Stomach (tissue), 19 donors: ENCODE measurements at regions of chr4 and their contacts with region 1.

Region 1: DNA sequence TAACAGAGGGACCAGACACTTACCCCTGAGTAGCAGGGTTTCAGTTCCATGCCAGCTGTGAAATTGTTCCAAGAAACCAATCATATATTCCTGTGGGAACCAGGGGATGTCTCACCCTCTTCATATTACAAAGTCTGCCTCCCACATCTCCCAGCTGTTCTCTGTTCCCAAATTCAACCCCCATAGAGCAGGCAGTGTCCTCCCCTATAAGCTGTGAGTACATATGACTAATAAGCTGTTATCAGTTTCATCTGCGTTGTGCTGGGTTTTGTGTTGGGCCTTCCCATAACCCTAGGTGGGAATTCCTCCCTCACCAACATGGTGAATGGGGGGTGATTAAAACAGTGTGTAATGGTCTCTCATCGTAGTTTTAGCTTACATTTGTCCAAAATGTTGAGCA is 41.0 kb downstream of the CEP44 start:
- DNase-seq: no peak
- H3K4me3 ChIP-seq: no peak overlapping the region
- H3K27ac ChIP-seq: no peak overlapping the region
- H3K4me1 ChIP-seq: no peaks in the 10 kb centered on the region
- H3K27me3 ChIP-seq: no peaks in the 10 kb centered on the region
- CTCF ChIP-seq: no peak
- EP300 ChIP-seq: no peak
- POLR2A ChIP-seq: no peak

Region 2: GRCh38 chr4:174080361-174080760 is 244.4 kb before region 1 on chr4:
- intact Hi-C with region 1: no loop called
- DNase-seq: no peak
- H3K4me3 ChIP-seq: no peak overlapping the region
- H3K27ac ChIP-seq: no peak overlapping the region
- H3K4me1 ChIP-seq: no peaks in the 10 kb centered on the region
- H3K27me3 ChIP-seq: no peaks in the 10 kb centered on the region
- CTCF ChIP-seq: no peak
- EP300 ChIP-seq: no peak
- POLR2A ChIP-seq: no peak

Region 3: DNA sequence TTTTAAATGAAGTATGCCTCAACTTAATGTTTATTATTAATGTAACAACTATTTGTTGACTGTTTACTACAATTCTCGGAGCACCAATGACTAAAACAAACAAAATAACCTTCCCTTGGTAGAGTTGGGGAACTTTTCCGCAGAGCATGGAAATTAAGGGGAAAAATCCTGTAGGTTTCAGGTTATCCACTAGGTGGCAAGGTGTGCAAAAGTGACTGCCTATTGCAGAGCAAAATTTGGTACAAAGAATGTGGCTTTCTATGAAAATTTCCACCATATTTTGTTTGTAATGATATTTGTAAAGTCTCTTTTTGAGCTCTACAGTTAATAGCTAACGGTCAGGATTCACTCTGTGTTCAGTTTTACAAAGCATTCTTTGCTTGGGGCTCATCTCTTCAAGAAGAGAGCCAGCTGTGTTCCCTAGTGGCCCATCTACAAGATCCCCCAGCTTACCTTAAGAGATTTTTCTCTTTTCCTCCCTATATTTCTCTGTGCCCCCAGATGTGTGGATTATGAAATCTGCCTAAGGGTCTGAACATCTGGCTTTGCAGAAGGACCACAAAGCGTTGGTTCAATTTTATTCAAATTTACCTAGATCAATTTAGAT is 102.4 kb before region 1 on chr4:
- intact Hi-C with region 1: loop called (anchors 10 kb)
- DNase-seq: peak in 1 of 2 donors; percentile 53
- H3K4me3 ChIP-seq: no peak overlapping the region
- H3K27ac ChIP-seq: no peak overlapping the region
- H3K4me1 ChIP-seq: peaks cover 12 to 17% (median 12%) of the 10 kb centered on the region in 4 donors
- H3K27me3 ChIP-seq: peaks cover 0 to 35% (median 19%) of the 10 kb centered on the region in 3 donors
- CTCF ChIP-seq: peak in 4 of 7 experiments; percentile 42 to 55 (median 54)
- EP300 ChIP-seq: no peak
- POLR2A ChIP-seq: no peak